Heart left ventricle (tissue), 16 donors: ENCODE measurements at regions of chr6 and their contacts with region 1.

Region 1: GRCh38 chr6:56708810-56709597 is 66.3 kb upstream of the DST start:
- DNase-seq: no peak
- ATAC-seq: peak in 2 of 4 donors; percentile 25 to 31
- H3K4me3 ChIP-seq: no peak overlapping the region
- H3K27ac ChIP-seq: peak overlapping the region in 11 of 12 donors; percentile 9 to 72 (median 49)
- H3K4me1 ChIP-seq: peaks cover 0 to 48% (median 25%) of the 10 kb centered on the region in 12 donors
- H3K27me3 ChIP-seq: no peaks in the 10 kb centered on the region
- CTCF ChIP-seq: peak; percentile 60 to 77 (median 72)
- POLR2A ChIP-seq: no peak

Region 2: DNA sequence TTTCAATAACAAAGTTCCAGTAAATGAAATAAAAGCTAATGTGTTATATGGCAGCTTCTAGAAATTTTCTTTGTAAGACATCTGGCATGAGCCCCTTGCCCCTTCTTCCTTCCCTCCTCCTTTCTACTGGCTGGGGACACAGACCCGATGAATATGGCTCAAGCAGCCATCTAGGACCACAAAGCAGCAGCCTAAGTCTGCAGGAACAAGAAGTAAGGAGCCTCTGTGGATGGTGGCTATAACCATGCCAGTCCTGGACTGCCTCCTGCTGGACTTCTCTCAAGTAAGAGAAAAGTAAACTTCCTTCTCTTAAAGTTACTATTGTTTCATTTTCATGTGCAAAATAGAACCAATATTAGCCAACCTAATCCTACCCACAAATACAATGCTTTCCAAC is 48.6 kb after region 1 on chr6:
- intact Hi-C with region 1: loop called in 7 of 10 experiments (anchors 5 kb)
- DNase-seq: no peak
- ATAC-seq: peak; percentile 37 to 63 (median 50)
- H3K4me3 ChIP-seq: no peak overlapping the region
- H3K27ac ChIP-seq: peak overlapping the region in 2 of 12 donors; percentile 24 to 55
- H3K4me1 ChIP-seq: peaks cover 0 to 63% (median 51%) of the 10 kb centered on the region in 12 donors
- H3K27me3 ChIP-seq: no peaks in the 10 kb centered on the region
- CTCF ChIP-seq: peak in 10 of 12 donors; percentile 30 to 54 (median 40)
- POLR2A ChIP-seq: no peak

Region 3: GRCh38 chr6:56766806-56767190 is 57.8 kb after region 1 on chr6:
- intact Hi-C with region 1: loop called in 1 of 10 experiments (anchors 5 kb)
- DNase-seq: no peak
- ATAC-seq: no peak
- H3K4me3 ChIP-seq: no peak overlapping the region
- H3K27ac ChIP-seq: peak overlapping the region in 2 of 12 donors; percentile 12 to 22
- H3K4me1 ChIP-seq: peaks cover 0 to 85% (median 59%) of the 10 kb centered on the region in 12 donors
- H3K27me3 ChIP-seq: no peaks in the 10 kb centered on the region
- CTCF ChIP-seq: no peak
- POLR2A ChIP-seq: no peak